ENCODE measurements at regions of chr7 and their contacts with region 1.

Region 1: GRCh38 chr7:21767300-21767900 is 178.3 kb downstream of the CDCA7L start:
- DNase-seq: peak; percentile 83
- ATAC-seq: peak; percentile 99
- H3K4me3 ChIP-seq: no peak overlapping the region
- H3K27ac ChIP-seq: no peak overlapping the region
- H3K4me1 ChIP-seq: no peaks in the 10 kb centered on the region
- H3K27me3 ChIP-seq: peaks cover 24% of the 10 kb centered on the region
- CTCF ChIP-seq: peak; percentile 90

Region 2: DNA sequence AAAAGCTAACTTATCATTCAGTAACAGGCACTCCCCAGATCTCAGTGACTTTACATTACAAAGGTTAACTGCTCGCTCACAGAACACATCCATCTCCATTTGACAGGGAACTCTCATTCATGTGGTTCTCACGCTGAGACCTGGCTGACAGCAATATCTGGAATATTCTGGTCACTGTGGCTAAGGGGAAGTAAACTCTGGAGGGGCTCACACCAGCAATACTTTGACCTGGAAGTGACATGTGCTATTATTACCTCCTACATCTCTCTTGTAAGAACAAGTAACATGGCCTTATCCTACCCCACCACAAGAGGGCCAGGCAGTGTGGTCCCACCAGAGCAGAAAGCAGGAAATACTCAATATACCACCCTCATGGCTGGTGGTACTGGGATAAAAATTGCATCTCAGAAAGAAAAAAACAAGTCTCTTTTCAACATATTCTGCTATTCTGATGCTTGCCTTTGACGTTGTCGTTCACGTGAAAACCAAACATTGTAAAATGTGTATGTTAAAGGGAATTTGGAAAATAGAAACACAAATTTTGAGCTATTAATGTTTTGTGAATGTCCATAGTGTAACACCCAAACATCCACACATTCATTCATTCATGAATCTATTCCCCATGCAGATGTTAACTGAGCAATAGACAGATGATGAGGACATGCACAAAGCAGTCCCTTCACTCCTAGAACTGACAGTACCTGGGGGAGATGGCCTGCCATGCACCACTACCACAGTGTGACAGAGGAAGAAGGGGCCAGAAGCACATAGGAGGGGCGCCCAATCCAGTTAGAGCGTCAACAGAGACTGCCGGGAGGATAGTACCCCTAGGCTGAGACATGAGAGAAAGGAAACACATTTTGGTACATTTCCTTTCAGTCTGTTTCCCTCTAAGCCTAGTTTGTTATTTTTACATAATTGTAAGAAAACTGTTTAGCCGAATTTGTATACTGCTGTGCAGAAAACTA is 505.5 kb before region 1 on chr7:
- CTCF ChIA-PET with region 1: interaction called, 3 read pairs
- POLR2A ChIA-PET with region 1: no interaction called
- intact Hi-C with region 1: loop called (anchors 1 kb)
- DNase-seq: peak; percentile 51
- ATAC-seq: peak; percentile 56
- H3K4me3 ChIP-seq: no peak overlapping the region
- H3K27ac ChIP-seq: no peak overlapping the region
- H3K4me1 ChIP-seq: no peaks in the 10 kb centered on the region
- H3K27me3 ChIP-seq: peaks cover 16% of the 10 kb centered on the region
- CTCF ChIP-seq: peak; percentile 73

Region 3: GRCh38 chr7:22082886-22083703 is 315.7 kb after region 1 on chr7:
- CTCF ChIA-PET with region 1: interaction called, 3 read pairs
- POLR2A ChIA-PET with region 1: no interaction called
- intact Hi-C with region 1: loop called (anchors 5 kb)
- DNase-seq: peak; percentile 79
- ATAC-seq: peak; percentile 95
- H3K4me3 ChIP-seq: peak overlapping the region; percentile 77
- H3K27ac ChIP-seq: no peak overlapping the region
- H3K4me1 ChIP-seq: peaks cover 11% of the 10 kb centered on the region; the same call in 1 of the 2 replicates
- H3K27me3 ChIP-seq: peaks cover 12% of the 10 kb centered on the region
- CTCF ChIP-seq: peak; percentile 89